Ovary (tissue), 10 donors: ENCODE measurements at regions of chr15 and their contacts with region 1.

Region 1: DNA sequence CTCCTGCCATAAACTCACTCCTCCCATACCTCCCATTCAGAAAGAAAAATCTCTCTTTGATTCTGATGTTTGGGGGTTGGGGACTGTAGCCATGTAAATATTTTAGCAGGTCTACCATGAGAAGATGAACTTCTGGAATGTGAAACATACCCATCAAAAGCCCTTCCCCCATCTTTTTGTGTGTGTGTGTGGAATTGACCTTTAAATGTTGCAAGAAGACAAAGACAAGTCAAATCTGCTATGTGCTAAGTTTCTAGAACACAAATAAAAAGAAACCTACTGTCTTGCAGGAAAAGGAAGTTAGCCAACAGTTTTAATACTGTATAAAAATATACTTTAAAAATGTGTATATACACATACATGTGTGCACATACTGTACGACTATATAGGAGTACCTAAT is 29.7 kb upstream of the USP50 start:
- DNase-seq: no peak
- H3K4me3 ChIP-seq: no peak overlapping the region
- H3K27ac ChIP-seq: no peak overlapping the region
- H3K4me1 ChIP-seq: no peaks in the 10 kb centered on the region
- H3K27me3 ChIP-seq: no peaks in the 10 kb centered on the region
- CTCF ChIP-seq: no peak
- EP300 ChIP-seq: no peak
- POLR2A ChIP-seq: no peak

Region 2: DNA sequence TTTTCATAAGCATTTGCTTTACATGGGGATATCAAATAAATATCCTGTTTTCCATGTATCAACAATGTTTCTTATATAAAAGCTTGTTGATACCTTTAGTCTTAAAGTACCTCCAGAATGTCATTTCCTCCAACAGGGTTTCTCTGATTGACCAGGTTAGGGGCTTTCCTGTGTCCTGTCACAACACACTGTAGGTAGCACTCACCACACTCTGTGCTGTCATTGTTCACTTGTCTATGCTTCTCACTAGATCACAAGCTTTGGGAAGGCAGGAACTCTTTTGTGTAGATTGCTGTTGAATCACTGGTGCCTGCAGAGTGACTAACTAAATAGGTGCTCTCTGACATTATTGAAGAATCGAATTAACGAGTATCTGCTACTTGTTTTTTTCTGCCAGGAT is 79.5 kb before region 1 on chr15:
- intact Hi-C with region 1: loop called in 1 of 4 experiments (anchors 10 kb)
- DNase-seq: no peak
- H3K4me3 ChIP-seq: no peak overlapping the region
- H3K27ac ChIP-seq: no peak overlapping the region
- H3K4me1 ChIP-seq: no peaks in the 10 kb centered on the region
- H3K27me3 ChIP-seq: no peaks in the 10 kb centered on the region
- CTCF ChIP-seq: no peak
- EP300 ChIP-seq: no peak
- POLR2A ChIP-seq: no peak

Region 3: DNA sequence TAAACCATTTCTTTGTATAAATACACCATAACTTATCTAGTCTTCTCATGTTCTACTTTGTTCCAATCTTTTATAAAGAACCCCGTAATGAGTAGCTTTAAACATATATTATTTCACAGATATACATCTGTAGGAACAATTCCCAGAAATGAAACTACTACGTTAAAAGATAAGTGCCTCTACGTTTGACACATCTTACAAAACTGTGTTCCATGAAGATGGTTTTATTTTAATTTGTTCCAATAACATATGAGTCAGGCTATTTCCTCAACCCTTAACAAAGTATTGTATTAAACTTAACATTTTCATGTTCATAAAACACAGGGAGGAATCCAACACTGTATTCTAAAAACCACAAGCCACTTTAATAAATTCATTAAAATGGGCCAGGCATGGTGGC is 57.5 kb after region 1 on chr15:
- intact Hi-C with region 1: no loop called
- DNase-seq: no peak
- H3K4me3 ChIP-seq: no peak overlapping the region
- H3K27ac ChIP-seq: no peak overlapping the region
- H3K4me1 ChIP-seq: no peaks in the 10 kb centered on the region
- H3K27me3 ChIP-seq: no peaks in the 10 kb centered on the region
- CTCF ChIP-seq: no peak
- EP300 ChIP-seq: no peak
- POLR2A ChIP-seq: no peak